Heart right ventricle (tissue), 16 donors: ENCODE measurements at regions of chr12 and their contacts with region 1.

Region 1: GRCh38 chr12:7460375-7461259 is 16.7 kb upstream of the CD163L1 start:
- DNase-seq: peak in 1 of 2 donors; percentile 30
- ATAC-seq: peak in 5 of 8 donors; percentile 58 to 84 (median 67)
- H3K4me3 ChIP-seq: no peak overlapping the region
- H3K27ac ChIP-seq: no peak overlapping the region
- H3K4me1 ChIP-seq: no peaks in the 10 kb centered on the region
- H3K27me3 ChIP-seq: peaks cover 0 to 4% (median 0%) of the 10 kb centered on the region in 7 donors
- CTCF ChIP-seq: peak; percentile 57 to 86 (median 73)

Region 2: GRCh38 chr12:7219599-7220243 is 240.9 kb before region 1 on chr12:
- intact Hi-C with region 1: loop called in 9 of 10 experiments (anchors 1 to 10 kb)
- DNase-seq: peak; percentile 26 to 68
- ATAC-seq: peak in 4 of 8 donors; percentile 29 to 59 (median 40)
- H3K4me3 ChIP-seq: no peak overlapping the region
- H3K27ac ChIP-seq: no peak overlapping the region
- H3K4me1 ChIP-seq: no peaks in the 10 kb centered on the region
- H3K27me3 ChIP-seq: peaks cover 0 to 6% (median 0%) of the 10 kb centered on the region in 7 donors
- CTCF ChIP-seq: peak; percentile 73 to 92 (median 87)

Region 3: GRCh38 chr12:7583571-7583970 is 123.0 kb after region 1 on chr12:
- intact Hi-C with region 1: no loop called
- DNase-seq: no peak
- ATAC-seq: no peak
- H3K4me3 ChIP-seq: no peak overlapping the region
- H3K27ac ChIP-seq: no peak overlapping the region
- H3K4me1 ChIP-seq: peaks cover 0 to 4% (median 0%) of the 10 kb centered on the region in 9 donors
- H3K27me3 ChIP-seq: peaks cover 0 to 4% (median 0%) of the 10 kb centered on the region in 7 donors
- CTCF ChIP-seq: no peak